Activated naive CD8-positive, alpha-beta T cell treated with anti-CD3 and anti-CD28 coated beads, Interleukin-2, amount 10 ng/mL, durations not matched to agents 7 days and 5 days (primary cell): ENCODE measurements at regions of chr11 and their contacts with region 1.

Region 1: DNA sequence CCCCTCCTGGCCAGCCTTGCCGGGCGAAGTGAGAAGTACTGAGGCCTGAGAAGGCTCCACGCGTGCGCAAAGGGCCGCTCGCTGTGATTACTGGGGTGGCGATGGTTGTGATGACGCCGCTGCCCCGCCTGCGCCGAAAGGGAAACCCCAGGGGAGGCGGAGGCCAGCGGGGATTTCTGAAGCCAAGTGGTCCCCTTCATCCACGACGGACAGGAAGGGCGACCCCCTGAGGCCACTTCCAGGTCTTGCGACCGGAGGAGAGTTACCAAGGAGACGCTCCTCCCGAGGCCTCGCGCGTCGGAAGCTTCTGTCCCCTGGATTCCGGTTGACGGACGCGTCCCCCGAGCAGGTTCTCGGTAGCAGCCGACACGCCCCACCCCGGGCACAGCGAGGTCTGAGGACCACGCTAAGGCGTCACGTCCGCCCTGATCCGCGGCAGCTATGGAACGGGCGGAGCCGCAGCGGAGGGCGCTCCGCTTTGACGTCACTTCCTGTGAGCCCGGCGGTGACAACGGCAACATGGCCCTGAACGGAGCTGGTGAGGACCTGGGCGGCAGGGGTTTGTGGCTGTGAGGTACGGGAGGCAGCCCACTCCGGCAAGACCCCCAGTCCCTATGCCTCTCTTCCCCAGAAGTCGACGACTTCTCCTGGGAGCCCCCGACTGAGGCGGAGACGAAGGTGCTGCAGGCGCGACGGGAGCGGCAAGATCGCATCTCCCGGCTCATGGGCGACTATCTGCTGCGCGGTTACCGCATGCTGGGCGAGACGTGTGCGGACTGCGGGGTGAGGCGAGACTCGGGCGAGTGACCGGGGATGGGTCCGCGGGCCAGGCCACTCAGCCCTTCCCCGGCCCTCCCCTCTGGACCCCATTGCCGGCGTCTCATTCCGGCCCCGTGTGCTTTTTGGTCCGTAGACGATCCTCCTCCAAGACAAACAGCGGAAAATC is at the start of gene ZNRD2:
- DNase-seq: peak; percentile 97
- ATAC-seq: peak; percentile 72
- H3K4me3 Mint-ChIP-seq: peak within 1 kb of the TSS; percentile 94
- H3K27ac Mint-ChIP-seq: peak within 1 kb of the TSS; percentile 98
- H3K4me1 Mint-ChIP-seq: peaks cover 58% of the 10 kb centered on the region
- H3K27me3 Mint-ChIP-seq: no peaks in the 10 kb centered on the region
- total RNA-seq, gene ZNRD2: 27.2 to 30.0 TPM

Region 2: DNA sequence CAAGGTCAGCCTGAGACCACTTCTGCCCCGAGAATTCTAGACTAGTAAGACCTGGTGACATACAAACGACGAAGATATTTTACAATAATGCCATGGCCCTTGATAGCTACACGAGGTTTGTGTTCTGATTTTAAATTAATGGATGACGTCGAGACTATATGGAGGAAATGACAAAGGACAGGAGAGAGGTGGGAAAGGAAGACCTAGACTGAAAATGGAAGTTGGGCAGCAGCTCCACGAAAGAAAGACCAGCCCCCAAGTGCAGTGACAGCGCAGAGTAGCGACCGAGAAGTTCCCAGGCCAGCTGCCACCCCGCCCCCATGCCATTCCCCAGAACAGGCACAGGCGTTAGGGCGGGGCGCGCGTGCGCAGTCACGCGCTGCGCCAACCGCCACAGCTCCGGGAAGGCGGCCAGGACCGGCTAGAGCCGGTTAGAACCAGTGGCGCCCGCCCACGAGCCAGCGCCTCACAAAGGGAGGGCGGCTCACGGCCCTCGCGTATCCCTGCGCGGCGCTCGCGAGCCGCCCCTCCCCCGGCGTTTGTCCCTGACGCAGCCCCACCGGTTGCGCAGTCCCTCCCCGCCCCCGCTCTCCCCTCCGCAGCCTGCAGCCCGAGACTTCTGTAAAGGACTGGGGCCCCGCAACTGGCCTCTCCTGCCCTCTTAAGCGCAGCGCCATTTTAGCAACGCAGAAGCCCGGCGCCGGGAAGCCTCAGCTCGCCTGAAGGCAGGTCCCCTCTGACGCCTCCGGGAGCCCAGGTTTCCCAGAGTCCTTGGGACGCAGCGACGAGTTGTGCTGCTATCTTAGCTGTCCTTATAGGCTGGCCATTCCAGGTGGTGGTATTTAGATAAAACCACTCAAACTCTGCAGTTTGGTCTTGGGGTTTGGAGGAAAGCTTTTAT is 72.9 kb before region 1 on chr11:
- POLR2A ChIA-PET with region 1: interaction called, 12 read pairs
- DNase-seq: peak; percentile 99
- ATAC-seq: peak; percentile 79
- H3K4me3 Mint-ChIP-seq: no peak overlapping the region
- H3K27ac Mint-ChIP-seq: no peak overlapping the region
- H3K4me1 Mint-ChIP-seq: peaks cover 23% of the 10 kb centered on the region
- H3K27me3 Mint-ChIP-seq: no peaks in the 10 kb centered on the region

Region 3: GRCh38 chr11:65540297-65541092 is 29.8 kb before region 1 on chr11:
- POLR2A ChIA-PET with region 1: interaction called, 51 read pairs
- DNase-seq: peak; percentile 97
- ATAC-seq: peak; percentile 86
- H3K4me3 Mint-ChIP-seq: peak overlapping the region; percentile 83
- H3K27ac Mint-ChIP-seq: peak overlapping the region; percentile 83
- H3K4me1 Mint-ChIP-seq: peaks cover 4% of the 10 kb centered on the region
- H3K27me3 Mint-ChIP-seq: no peaks in the 10 kb centered on the region

Region 4: GRCh38 chr11:65551572-65552398 is 18.5 kb before region 1 on chr11:
- POLR2A ChIA-PET with region 1: interaction called, 42 read pairs
- DNase-seq: peak; percentile 74
- ATAC-seq: peak; percentile 29
- H3K4me3 Mint-ChIP-seq: peak overlapping the region; percentile 1
- H3K27ac Mint-ChIP-seq: peak overlapping the region; percentile 30
- H3K4me1 Mint-ChIP-seq: peaks cover 57% of the 10 kb centered on the region
- H3K27me3 Mint-ChIP-seq: no peaks in the 10 kb centered on the region

Region 5: GRCh38 chr11:65588199-65589054 is 18.2 kb after region 1 on chr11:
- POLR2A ChIA-PET with region 1: interaction called, 107 read pairs
- DNase-seq: peak; percentile 75
- ATAC-seq: peak; percentile 82
- H3K4me3 Mint-ChIP-seq: peak overlapping the region; percentile 64
- H3K27ac Mint-ChIP-seq: peak overlapping the region; percentile 93
- H3K4me1 Mint-ChIP-seq: peaks cover 31% of the 10 kb centered on the region
- H3K27me3 Mint-ChIP-seq: no peaks in the 10 kb centered on the region

Region 6: DNA sequence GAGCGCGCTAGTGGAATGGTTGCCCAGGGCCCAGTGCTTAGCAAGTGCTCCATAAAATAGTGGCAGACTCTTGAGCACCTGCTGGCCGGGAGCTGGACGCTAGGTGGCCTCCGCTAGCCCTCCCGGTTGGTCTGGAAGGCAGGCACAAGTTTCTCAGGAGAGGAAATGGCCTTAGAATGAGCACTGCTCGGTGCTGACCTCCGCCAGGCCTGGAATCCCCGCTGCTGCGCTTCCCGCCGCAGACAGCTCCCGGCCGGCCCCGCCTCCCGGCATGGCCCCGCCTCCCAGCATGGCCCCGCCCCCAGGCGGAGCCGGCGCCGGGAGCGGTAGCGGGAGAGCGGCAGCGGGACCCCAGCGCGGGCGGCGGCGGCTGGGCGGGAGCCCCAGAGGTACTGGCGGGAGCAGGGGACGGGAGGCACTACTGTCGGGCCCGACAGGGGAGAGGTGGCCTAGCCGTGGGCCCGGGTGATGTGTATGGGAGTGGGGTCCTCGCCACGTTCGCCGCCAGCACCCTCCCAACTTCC is 67.6 kb after region 1 on chr11 and contains the start of gene SIPA1:
- POLR2A ChIA-PET with region 1: interaction called, 11 read pairs
- DNase-seq: peak; percentile 94
- ATAC-seq: peak; percentile 34
- H3K4me3 Mint-ChIP-seq: peak within 1 kb of the TSS; percentile 92
- H3K27ac Mint-ChIP-seq: peak within 1 kb of the TSS; percentile 93
- H3K4me1 Mint-ChIP-seq: peaks cover 37% of the 10 kb centered on the region
- H3K27me3 Mint-ChIP-seq: no peaks in the 10 kb centered on the region
- total RNA-seq, gene SIPA1: 245 to 266 TPM

Region 7: DNA sequence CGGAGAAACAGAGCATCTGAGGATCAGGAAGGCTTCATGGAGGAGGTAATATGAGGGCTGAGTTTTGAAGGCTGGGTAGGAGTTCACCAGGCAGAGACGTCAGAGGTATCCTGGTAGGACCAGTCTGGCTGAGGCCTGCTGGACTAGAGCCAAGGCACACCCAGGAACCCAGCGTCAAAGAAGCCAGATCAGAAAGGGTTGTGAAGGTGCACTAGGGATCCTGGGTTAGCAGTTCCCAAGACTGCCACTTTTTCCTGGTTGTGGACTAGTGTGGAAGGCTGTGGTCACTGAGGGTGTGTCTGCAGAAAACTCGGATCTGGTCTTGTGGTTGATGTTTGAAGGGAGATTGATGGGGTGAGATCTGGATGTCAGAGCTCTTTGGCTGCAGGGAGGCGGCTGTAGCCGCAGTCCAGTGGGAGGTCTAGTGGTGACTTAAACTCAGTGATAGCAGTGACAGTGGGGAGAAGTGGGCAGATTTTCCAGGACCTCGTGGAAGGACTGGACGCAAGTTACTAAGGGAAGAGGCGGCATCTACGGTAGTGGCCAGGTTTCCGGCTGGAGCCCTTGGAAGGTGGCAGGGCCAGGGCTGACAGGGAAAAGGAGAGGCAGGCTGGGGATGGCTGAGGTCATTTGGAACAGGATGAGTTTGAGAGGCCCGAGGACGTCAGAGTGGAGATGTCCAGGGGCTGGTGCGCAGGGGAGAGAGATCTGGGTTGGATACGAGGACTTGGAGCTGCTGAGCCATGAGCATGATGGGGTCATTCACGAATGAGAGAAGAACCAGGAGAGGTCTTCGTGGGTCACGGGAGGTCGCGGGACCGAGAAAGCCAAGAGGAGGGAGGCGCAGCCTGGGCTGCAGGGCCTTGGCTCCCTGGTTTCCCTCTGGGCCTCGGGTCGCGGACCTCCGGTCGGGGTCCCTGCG is 81.6 kb after region 1 on chr11:
- POLR2A ChIA-PET with region 1: no interaction called
- DNase-seq: no peak
- ATAC-seq: no peak
- H3K4me3 Mint-ChIP-seq: peak overlapping the region; percentile 75
- H3K27ac Mint-ChIP-seq: peak overlapping the region; percentile 78
- H3K4me1 Mint-ChIP-seq: peaks cover 33% of the 10 kb centered on the region
- H3K27me3 Mint-ChIP-seq: no peaks in the 10 kb centered on the region